ENCODE measurements at regions of chr1 and their contacts with region 1.

Region 1: GRCh38 chr1:166479052-166479631 is 312.3 kb upstream of the FAM78B start:
- DNase-seq: peak; percentile 21 to 28
- ATAC-seq: no peak
- H3K4me3 ChIP-seq: no peak overlapping the region
- H3K27ac ChIP-seq: no peak overlapping the region
- H3K4me1 ChIP-seq: no peaks in the 10 kb centered on the region
- H3K27me3 ChIP-seq: peaks cover 0 to 7% (median 0%) of the 10 kb centered on the region in 7 donors
- CTCF ChIP-seq: peak; percentile 70 to 87 (median 83)

Region 2: DNA sequence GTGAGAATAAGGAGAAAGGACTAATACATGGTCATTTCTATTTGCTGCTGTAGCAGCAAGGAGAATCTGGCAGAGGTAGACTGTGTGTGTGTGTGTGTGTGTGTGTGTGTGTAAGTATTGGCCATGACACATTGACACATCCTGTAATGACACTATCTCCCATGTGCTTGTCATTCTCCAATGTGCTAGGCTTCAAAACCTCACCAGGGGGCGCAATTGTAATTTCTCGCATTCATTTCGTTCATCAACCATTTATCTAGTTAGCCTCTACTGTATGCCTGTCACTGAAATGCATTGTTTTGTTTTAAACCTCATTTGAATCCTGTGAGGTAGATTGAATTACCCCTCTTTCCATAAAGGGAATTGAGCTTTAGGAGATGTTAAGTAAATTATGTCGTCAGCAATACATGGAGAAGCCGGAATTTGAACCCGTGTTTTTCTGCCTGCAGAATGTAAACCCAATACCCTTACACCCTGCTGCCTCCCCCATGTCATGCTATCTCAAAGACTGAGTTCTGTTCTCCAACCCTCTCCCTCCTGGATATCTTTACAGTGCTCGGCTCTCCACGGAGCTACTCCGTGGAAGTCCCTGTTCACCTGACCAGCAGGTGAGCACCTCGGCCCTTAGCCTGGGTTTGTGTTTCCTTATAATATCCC is 550.9 kb before region 1 on chr1:
- intact Hi-C with region 1: loop called (anchors 1 to 5 kb)
- DNase-seq: peak in 1 of 2 donors; percentile 23
- ATAC-seq: peak in 3 of 8 donors; percentile 27 to 49 (median 47)
- H3K4me3 ChIP-seq: no peak overlapping the region
- H3K27ac ChIP-seq: no peak overlapping the region
- H3K4me1 ChIP-seq: no peaks in the 10 kb centered on the region
- H3K27me3 ChIP-seq: peaks cover 0 to 1% (median 0%) of the 10 kb centered on the region in 7 donors
- CTCF ChIP-seq: peak in 8 of 9 donors; percentile 39 to 74 (median 66)

Region 3: GRCh38 chr1:166597516-166597915 is 118.4 kb after region 1 on chr1:
- intact Hi-C with region 1: no loop called
- DNase-seq: no peak
- ATAC-seq: no peak
- H3K4me3 ChIP-seq: no peak overlapping the region
- H3K27ac ChIP-seq: no peak overlapping the region
- H3K4me1 ChIP-seq: no peaks in the 10 kb centered on the region
- H3K27me3 ChIP-seq: no peaks in the 10 kb centered on the region
- CTCF ChIP-seq: no peak